ENCODE measurements at regions of chr4 and their contacts with region 1.

Region 1: GRCh38 chr4:123396307-123397143 is at the start of gene SPRY1:
- DNase-seq: peak; percentile 94
- H3K4me3 ChIP-seq: peak within 1 kb of the TSS; percentile 65 to 88 (median 76)
- H3K27ac ChIP-seq: peak within 1 kb of the TSS; percentile 83 to 90 (median 86)
- H3K4me1 ChIP-seq: peaks cover 0 to 5% (median 4%) of the 10 kb centered on the region in 4 donors
- H3K27me3 ChIP-seq: no peaks in the 10 kb centered on the region
- CTCF ChIP-seq: no peak
- EP300 ChIP-seq: no peak
- POLR2A ChIP-seq: peak; percentile 27 to 62
- total RNA-seq, gene SPRY1: 37.6 to 84.4 (median 56.7) TPM

Region 2: GRCh38 chr4:123127218-123127617 is 269.3 kb before region 1 on chr4:
- intact Hi-C with region 1: loop called (anchors 5 kb)
- DNase-seq: no peak
- H3K4me3 ChIP-seq: no peak overlapping the region
- H3K27ac ChIP-seq: no peak overlapping the region
- H3K4me1 ChIP-seq: no peaks in the 10 kb centered on the region
- H3K27me3 ChIP-seq: no peaks in the 10 kb centered on the region
- CTCF ChIP-seq: peak in 1 of 4 experiments; percentile 17
- EP300 ChIP-seq: no peak
- POLR2A ChIP-seq: no peak

Region 3: DNA sequence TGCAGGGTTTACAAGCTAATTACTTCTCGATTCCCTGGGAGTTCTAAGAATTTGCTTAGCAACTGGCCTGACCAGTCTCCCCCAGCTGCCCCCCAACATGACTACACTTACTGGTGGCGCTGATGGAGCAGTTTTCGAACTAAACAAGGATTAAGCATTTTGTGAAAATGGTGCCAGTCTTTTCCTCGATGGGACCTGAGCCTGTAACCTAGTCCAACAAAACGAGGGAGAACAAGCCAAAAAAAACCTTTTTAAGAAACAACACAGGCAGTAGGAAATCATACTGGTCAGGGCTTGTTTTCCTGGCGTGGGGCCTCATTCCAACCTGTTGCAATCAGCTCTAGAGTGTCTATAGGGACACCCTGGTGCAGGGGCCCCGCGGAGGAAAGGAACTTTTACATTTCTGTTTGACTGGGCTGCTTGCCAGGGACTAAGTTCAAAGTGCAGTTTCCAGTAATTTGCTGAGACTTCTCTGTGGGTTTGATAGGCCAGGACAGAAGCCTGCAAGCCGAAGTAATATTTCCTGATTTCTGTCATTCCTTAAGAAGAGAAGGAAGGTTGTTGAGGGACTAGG is 158.8 kb after region 1 on chr4:
- intact Hi-C with region 1: loop called (anchors 5 kb)
- DNase-seq: peak; percentile 92
- H3K4me3 ChIP-seq: no peak overlapping the region
- H3K27ac ChIP-seq: peak overlapping the region; percentile 30 to 72 (median 65)
- H3K4me1 ChIP-seq: peaks cover 0 to 28% (median 17%) of the 10 kb centered on the region in 4 donors
- H3K27me3 ChIP-seq: no peaks in the 10 kb centered on the region
- CTCF ChIP-seq: no peak
- EP300 ChIP-seq: no peak
- POLR2A ChIP-seq: no peak

Region 4: DNA sequence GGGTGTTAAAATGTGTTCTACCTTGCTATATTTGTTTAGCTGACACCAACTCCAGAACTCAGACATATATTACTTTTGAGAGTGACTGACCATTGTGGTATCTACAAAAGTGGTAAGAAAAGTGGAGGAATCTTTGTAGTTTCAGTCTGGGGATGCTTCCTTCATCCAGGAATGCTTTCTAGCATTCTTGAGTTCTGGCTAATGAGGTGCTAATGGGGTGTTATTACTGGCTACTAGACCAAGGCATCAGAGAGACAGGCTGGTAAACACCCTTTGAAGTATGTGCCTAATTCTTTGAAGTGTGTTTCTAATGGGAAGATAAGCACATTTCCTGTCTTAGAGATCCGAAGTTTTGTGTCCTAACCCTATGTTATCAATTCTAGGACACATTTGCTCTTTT is 310.4 kb after region 1 on chr4:
- intact Hi-C with region 1: no loop called
- DNase-seq: no peak
- H3K4me3 ChIP-seq: no peak overlapping the region
- H3K27ac ChIP-seq: no peak overlapping the region
- H3K4me1 ChIP-seq: no peaks in the 10 kb centered on the region
- H3K27me3 ChIP-seq: no peaks in the 10 kb centered on the region
- CTCF ChIP-seq: no peak
- EP300 ChIP-seq: no peak
- POLR2A ChIP-seq: no peak

Region 5: DNA sequence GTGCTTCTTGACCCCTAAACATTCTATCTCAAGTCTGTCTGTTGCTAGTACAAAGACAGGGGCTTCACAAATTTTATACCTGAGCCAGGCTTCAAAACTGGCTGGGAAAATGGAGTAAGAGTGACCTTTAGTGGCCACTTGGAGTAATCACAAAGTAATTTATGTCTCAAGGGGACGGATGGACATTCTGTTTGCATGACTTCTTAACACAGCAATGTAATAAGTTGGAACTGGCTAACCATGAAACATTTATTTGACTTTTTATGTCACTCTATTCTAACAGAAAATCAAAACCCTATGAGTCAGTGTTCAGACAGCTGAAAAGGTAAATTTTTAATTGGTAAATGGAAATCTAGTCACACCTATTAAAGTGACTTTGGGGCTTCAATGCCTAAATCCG is 715.4 kb after region 1 on chr4:
- intact Hi-C with region 1: loop called (anchors 2 kb)
- DNase-seq: no peak
- H3K4me3 ChIP-seq: no peak overlapping the region
- H3K27ac ChIP-seq: no peak overlapping the region
- H3K4me1 ChIP-seq: peaks cover 0 to 16% (median 4%) of the 10 kb centered on the region in 4 donors
- H3K27me3 ChIP-seq: no peaks in the 10 kb centered on the region
- CTCF ChIP-seq: peak; percentile 38 to 57 (median 47)
- EP300 ChIP-seq: peak in 1 of 4 donors; percentile 7
- POLR2A ChIP-seq: no peak

Region 6: DNA sequence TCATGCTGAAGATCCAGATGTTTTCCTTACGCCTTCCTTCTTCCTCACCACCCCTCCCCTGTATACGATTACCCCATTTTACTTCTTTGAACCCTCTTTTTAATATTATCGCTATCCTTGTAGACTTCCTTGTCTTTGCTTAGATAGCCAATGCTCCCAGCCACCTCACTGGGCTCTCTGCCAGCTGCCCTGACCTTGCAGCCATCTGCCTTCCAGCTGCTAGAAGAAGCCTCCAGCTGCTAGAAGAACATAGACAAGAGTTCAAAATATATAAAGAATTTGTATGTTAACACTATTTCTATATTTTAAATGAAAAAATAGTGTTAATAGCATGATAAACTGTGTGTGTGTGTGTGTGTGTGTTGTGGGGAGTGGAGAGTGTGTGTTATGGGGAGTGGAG is 941.3 kb after region 1 on chr4:
- intact Hi-C with region 1: no loop called
- DNase-seq: no peak
- H3K4me3 ChIP-seq: no peak overlapping the region
- H3K27ac ChIP-seq: no peak overlapping the region
- H3K4me1 ChIP-seq: no peaks in the 10 kb centered on the region
- H3K27me3 ChIP-seq: no peaks in the 10 kb centered on the region
- CTCF ChIP-seq: no peak
- EP300 ChIP-seq: no peak
- POLR2A ChIP-seq: no peak